ENCODE measurements at regions of chr3 and their contacts with region 1.

Region 1: DNA sequence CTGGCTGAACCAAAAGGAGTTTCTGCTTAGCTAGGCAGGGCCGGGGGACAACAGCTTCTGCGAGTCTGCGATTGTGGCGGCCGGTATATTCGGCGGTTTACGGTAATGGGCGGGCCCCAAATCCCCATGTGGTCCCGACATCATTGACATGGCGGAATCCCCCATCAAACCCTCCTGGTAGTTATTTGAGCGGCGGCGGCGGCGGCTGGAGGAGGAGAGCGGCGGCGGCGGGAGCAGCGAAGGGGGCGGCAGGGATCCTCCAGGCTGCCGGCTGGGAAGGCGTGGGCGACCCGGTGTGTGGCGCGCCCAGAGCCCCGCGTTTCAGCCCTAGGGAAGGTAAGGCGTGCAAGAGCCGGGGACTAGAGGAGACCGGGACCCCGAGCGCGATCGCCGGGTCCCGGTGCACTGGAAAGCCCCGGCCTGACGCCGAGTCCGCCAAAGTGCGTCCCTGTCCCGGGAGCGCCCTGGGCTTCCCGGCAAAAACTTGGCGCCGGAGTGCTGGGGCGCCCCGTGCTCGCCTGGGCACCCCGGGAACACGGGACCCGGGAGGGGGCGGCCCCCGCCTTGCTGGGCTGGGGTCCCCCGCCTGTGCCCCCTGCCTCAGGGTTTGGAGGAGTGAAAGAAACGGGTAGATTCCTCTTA is at the start of gene FNDC3B:
- DNase-seq: peak; percentile 91 to 96
- H3K4me3 ChIP-seq: peak within 1 kb of the TSS; percentile 63
- H3K27ac ChIP-seq: peak within 1 kb of the TSS; percentile 96
- H3K4me1 ChIP-seq: peaks cover 58% of the 10 kb centered on the region
- H3K27me3 ChIP-seq: no peaks in the 10 kb centered on the region
- CTCF ChIP-seq: no peak
- total RNA-seq, gene FNDC3B: 79.4 and 106 TPM in 2 replicates

Region 2: DNA sequence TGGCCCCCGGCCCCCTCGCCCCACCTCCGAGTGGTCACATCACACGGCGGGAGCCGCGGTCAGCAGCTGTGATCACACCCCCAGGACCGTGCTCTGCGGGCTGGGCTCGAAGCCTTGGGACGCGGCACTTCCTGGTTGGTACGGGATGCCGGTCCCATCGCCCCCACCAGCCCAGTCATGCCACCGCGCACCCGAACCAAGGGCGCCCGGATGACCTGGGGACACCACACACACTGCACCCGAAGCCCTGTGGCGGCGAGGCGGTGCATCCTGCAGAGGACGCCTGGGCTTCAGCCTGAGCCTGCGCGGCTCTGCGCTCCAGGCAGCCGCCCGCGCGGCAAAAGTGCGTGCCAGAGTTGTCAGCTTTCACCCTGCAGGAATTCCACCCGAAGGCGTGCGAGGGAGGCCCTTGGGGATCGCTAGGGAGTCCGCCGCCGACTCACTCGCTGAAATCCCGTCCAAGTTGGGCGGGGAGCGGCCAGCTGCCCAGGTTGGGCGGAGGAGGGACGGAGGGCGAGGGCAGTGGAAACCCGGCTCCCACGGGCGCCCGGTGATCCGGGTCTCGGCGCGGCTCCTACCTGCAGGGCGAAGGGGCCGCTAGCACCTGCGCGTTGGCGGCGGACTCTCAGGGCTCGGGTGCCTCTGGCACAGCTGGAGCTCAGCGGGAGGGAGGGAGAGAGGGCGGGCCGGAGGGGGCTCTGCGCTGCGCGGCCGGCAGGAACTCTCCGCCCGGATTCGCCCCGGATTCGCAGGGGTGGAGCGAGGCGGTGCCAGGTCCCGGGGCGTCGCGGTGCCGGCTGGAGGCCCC is 229.5 kb before region 1 on chr3 and contains the start of gene PLD1:
- CTCF ChIA-PET with region 1: no interaction called
- POLR2A ChIA-PET with region 1: no interaction called
- intact Hi-C with region 1: loop called (anchors 1 kb)
- DNase-seq: peak; percentile 86 to 95
- H3K4me3 ChIP-seq: peak within 1 kb of the TSS; percentile 61
- H3K27ac ChIP-seq: peak within 1 kb of the TSS; percentile 98
- H3K4me1 ChIP-seq: peaks cover 75% of the 10 kb centered on the region
- H3K27me3 ChIP-seq: no peaks in the 10 kb centered on the region
- CTCF ChIP-seq: no peak
- total RNA-seq, gene PLD1: 32.5 and 33.3 TPM in 2 replicates

Region 3: GRCh38 chr3:171846597-171846996 is 193.0 kb before region 1 on chr3:
- CTCF ChIA-PET with region 1: no interaction called
- POLR2A ChIA-PET with region 1: interaction called, 4 read pairs
- intact Hi-C with region 1: loop called (anchors 1 kb)
- DNase-seq: peak in 1 of 2 experiments; percentile 35
- H3K4me3 ChIP-seq: no peak overlapping the region
- H3K27ac ChIP-seq: no peak overlapping the region
- H3K4me1 ChIP-seq: peaks cover 19% of the 10 kb centered on the region
- H3K27me3 ChIP-seq: no peaks in the 10 kb centered on the region
- CTCF ChIP-seq: no peak

Region 4: GRCh38 chr3:171935261-171935974 is 104.1 kb before region 1 on chr3:
- CTCF ChIA-PET with region 1: no interaction called
- POLR2A ChIA-PET with region 1: no interaction called
- intact Hi-C with region 1: loop called (anchors 1 kb)
- DNase-seq: peak in 1 of 2 experiments; percentile 56
- H3K4me3 ChIP-seq: peak overlapping the region; percentile 28; the same call in 1 of the 2 replicates
- H3K27ac ChIP-seq: peak overlapping the region; percentile 95
- H3K4me1 ChIP-seq: peaks cover 53% of the 10 kb centered on the region
- H3K27me3 ChIP-seq: no peaks in the 10 kb centered on the region
- CTCF ChIP-seq: no peak

Region 5: DNA sequence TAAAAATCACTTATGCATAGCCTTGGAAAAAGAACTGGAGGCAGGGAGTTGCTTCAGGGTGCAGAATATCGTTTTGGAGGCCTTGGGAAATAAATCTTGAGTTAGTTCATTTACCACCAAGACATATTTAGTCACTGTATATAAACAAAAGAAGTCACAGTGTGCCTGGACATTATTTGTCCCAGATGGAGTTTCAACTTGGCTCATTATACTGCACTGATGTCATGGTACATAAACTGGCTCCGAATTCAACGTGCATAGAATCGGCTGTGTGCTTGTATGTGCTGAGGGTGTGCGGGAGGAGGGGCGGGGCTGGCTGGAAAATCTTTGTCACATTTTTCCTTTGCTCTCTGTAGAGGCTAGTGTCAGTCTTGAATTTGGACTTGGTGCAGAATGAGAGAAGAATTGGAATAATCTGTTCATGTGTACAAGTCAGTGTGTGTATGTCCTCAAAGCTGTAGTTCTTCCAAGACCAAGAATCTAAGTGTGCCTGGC is 86.5 kb after region 1 on chr3:
- CTCF ChIA-PET with region 1: no interaction called
- POLR2A ChIA-PET with region 1: no interaction called
- intact Hi-C with region 1: no loop called
- DNase-seq: no peak
- H3K4me3 ChIP-seq: no peak overlapping the region
- H3K27ac ChIP-seq: peak overlapping the region; percentile 78
- H3K4me1 ChIP-seq: peaks cover 78% of the 10 kb centered on the region
- H3K27me3 ChIP-seq: no peaks in the 10 kb centered on the region
- CTCF ChIP-seq: no peak

Region 6: DNA sequence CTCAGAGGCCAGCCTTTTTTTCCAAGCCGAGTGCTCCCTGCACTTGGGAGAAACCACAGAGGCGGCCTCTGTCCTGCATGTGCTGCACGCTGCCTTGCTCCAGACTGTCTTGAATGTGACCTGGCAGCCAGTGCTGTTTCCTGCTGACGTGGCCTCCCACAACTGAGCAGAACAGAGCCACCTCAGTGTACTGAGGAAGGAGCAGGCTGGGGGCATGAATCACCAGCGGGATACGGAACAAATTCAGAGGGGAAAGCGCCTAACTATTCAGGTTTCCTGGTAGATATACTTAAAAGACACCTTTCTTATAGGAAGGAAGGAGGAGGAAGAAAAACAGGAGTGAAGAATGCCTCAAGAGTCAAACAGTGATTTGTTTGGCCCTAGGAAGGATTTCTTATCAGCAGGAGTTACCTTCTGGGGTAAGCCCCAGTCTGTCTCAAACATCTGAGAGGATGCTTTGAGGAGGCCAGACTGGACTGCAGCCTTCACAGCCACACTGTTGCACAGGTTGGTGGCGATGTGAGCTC is 113.8 kb after region 1 on chr3:
- CTCF ChIA-PET with region 1: no interaction called
- POLR2A ChIA-PET with region 1: no interaction called
- intact Hi-C with region 1: loop called (anchors 5 kb)
- DNase-seq: peak; percentile 92 to 99
- H3K4me3 ChIP-seq: peak overlapping the region; percentile 28; the same call in 1 of the 2 replicates
- H3K27ac ChIP-seq: peak overlapping the region; percentile 96
- H3K4me1 ChIP-seq: peaks cover 98% of the 10 kb centered on the region
- H3K27me3 ChIP-seq: no peaks in the 10 kb centered on the region
- CTCF ChIP-seq: no peak

Region 7: GRCh38 chr3:172332256-172333041 is 292.9 kb after region 1 on chr3:
- CTCF ChIA-PET with region 1: interaction called, 6 read pairs
- POLR2A ChIA-PET with region 1: no interaction called
- intact Hi-C with region 1: loop called (anchors 5 kb)
- DNase-seq: peak; percentile 56 to 66
- H3K4me3 ChIP-seq: no peak overlapping the region
- H3K27ac ChIP-seq: no peak overlapping the region; the same call in 1 of the 2 replicates
- H3K4me1 ChIP-seq: 0 out of 2 replicates have a peak, but pooled peaks cover 7% of the 10 kb centered on the region
- H3K27me3 ChIP-seq: no peaks in the 10 kb centered on the region
- CTCF ChIP-seq: peak; percentile 98

Measured in PC-9 (cell line).